Upper lobe of right lung (tissue), 1 donor: ENCODE measurements at regions of chr1 and their contacts with region 1.

Region 1: GRCh38 chr1:31617917-31618660 is 600 bp downstream of the HCRTR1 start:
- DNase-seq: peak; percentile 80
- ATAC-seq: peak; percentile 78
- H3K4me3 ChIP-seq: peak overlapping the region; percentile 55
- H3K27ac ChIP-seq: no peak overlapping the region
- H3K4me1 ChIP-seq: peaks cover 4% of the 10 kb centered on the region
- H3K27me3 ChIP-seq: peaks cover 24% of the 10 kb centered on the region
- CTCF ChIP-seq: peak; percentile 81

Region 2: DNA sequence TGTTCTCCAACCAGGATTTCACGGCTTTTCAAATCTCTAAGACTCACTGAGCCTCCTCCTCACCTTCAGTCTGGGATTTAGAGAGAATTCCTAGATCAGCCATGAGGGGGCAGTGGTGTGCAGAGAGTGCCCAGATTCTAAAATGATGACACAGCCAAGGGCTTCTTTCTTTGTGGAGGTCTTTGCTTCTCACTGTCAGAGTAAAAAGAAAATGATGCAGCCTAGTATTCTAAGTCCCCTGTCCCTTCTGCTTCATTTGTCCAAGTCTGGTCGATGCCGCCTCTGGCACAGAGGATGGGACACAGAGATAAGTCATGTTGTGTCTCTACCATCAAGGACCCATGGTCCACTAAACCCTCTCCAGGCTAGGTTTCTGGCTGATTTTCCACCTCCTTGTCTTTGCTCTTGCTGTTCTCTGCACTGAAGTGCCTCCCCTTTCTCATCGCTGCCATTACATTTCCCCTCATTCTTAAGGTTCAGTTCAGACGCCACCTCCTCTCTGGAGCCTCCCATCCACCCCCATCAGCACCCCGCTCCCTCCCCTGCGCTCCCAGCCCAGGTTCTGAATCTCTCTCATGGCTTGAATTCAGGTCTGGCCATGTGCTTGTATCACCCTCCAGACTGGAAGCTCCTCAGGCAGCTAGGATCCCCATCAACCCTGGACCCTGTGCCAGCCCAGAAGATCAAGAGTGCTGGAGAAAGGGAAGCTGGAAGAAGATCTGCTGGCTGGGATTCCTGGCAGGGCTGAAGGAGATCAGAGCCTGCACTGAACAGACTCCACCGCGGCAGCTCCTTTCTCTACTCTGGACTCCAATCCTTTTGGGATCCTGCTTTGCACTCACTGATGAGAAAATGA is 53.7 kb before region 1 on chr1:
- intact Hi-C with region 1: loop called (anchors 10 kb)
- DNase-seq: peak; percentile 46
- ATAC-seq: peak; percentile 85
- H3K4me3 ChIP-seq: no peak overlapping the region
- H3K27ac ChIP-seq: no peak overlapping the region
- H3K4me1 ChIP-seq: peaks cover 4% of the 10 kb centered on the region
- H3K27me3 ChIP-seq: no peaks in the 10 kb centered on the region
- CTCF ChIP-seq: peak; percentile 84